Activated CD8-positive, alpha-beta T cell treated with anti-CD3 and anti-CD28 coated beads, Interleukin-2, amount 10 ng/mL, durations not matched to agents 7 days and 5 days (primary cell): ENCODE measurements at regions of chr15 and their contacts with region 1.

Region 1: GRCh38 chr15:70722266-70723121 is 40.9 kb downstream of the UACA start:
- DNase-seq: no peak
- ATAC-seq: no peak
- H3K4me3 Mint-ChIP-seq: no peak overlapping the region
- H3K27ac Mint-ChIP-seq: no peak overlapping the region
- H3K4me1 Mint-ChIP-seq: no peaks in the 10 kb centered on the region
- H3K27me3 Mint-ChIP-seq: peaks cover 10% of the 10 kb centered on the region

Region 2: GRCh38 chr15:70447928-70448698 is 274.4 kb before region 1 on chr15:
- CTCF ChIA-PET with region 1: no interaction called
- POLR2A ChIA-PET with region 1: no interaction called
- DNase-seq: peak; percentile 80
- ATAC-seq: peak; percentile 73
- H3K4me3 Mint-ChIP-seq: peak overlapping the region; percentile 46
- H3K27ac Mint-ChIP-seq: peak overlapping the region; percentile 53
- H3K4me1 Mint-ChIP-seq: peaks cover 64% of the 10 kb centered on the region
- H3K27me3 Mint-ChIP-seq: peaks cover 37% of the 10 kb centered on the region

Region 3: GRCh38 chr15:70535071-70535954 is 187.2 kb before region 1 on chr15:
- CTCF ChIA-PET with region 1: interaction called, 12 read pairs
- POLR2A ChIA-PET with region 1: no interaction called
- DNase-seq: peak; percentile 89
- ATAC-seq: peak; percentile 88
- H3K4me3 Mint-ChIP-seq: peak overlapping the region; percentile 80
- H3K27ac Mint-ChIP-seq: peak overlapping the region; percentile 96
- H3K4me1 Mint-ChIP-seq: peaks cover 47% of the 10 kb centered on the region
- H3K27me3 Mint-ChIP-seq: peaks cover 5% of the 10 kb centered on the region

Region 4: DNA sequence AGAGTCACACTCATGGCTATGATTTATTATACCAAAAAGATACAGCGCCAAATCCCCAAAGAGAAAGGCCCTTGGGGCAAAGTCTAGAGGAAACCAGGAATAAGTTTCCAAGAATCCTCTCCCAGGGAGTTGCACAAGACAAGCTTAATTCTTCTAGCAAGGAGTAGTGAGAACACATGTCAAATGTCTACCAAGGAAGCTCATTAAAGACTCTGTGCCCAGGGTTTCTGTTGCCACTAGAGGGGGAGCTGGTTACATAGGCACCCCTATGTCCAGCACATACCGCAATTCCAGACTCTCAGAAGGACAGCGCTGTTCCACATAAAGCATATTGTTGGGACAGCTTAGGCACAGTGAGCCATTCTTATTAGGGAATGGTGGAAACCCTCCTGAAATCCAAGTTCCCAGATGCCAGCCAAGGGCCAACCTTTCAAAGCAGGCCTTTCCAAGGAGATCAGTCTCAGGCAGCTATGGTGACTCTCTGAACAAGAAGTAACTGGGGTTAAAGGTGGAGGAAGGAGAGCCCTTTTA is 153.3 kb before region 1 on chr15:
- CTCF ChIA-PET with region 1: interaction called, 11 read pairs
- POLR2A ChIA-PET with region 1: no interaction called
- DNase-seq: no peak
- ATAC-seq: no peak
- H3K4me3 Mint-ChIP-seq: no peak overlapping the region
- H3K27ac Mint-ChIP-seq: no peak overlapping the region
- H3K4me1 Mint-ChIP-seq: peaks cover 3% of the 10 kb centered on the region
- H3K27me3 Mint-ChIP-seq: peaks cover 5% of the 10 kb centered on the region

Region 5: GRCh38 chr15:70596354-70597055 is 126.0 kb before region 1 on chr15:
- CTCF ChIA-PET with region 1: no interaction called
- POLR2A ChIA-PET with region 1: no interaction called
- DNase-seq: no peak
- ATAC-seq: no peak
- H3K4me3 Mint-ChIP-seq: no peak overlapping the region
- H3K27ac Mint-ChIP-seq: no peak overlapping the region
- H3K4me1 Mint-ChIP-seq: peaks cover 9% of the 10 kb centered on the region
- H3K27me3 Mint-ChIP-seq: peaks cover 16% of the 10 kb centered on the region

Region 6: DNA sequence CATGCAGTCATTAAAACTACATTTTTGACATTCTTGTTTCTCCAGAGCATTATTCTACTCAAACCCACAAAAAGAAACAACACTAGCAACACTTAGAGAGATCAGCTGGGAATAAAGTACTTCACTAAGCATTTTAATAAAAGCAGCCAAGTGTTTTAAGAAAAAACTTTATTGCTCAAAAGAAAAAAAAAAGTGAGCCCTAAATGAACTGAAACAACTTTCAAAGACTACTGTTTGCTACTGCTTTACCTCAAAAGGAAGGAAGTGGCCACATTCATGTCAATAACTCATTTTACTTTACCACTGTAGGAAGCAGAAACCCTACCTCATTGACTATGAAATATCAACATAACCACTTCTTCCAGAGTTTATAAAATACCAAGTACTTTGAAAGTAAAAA is 50.4 kb before region 1 on chr15:
- CTCF ChIA-PET with region 1: interaction called, 36 read pairs
- POLR2A ChIA-PET with region 1: no interaction called
- DNase-seq: peak; percentile 45
- ATAC-seq: peak; percentile 94
- H3K4me3 Mint-ChIP-seq: peak overlapping the region; percentile 68
- H3K27ac Mint-ChIP-seq: peak overlapping the region; percentile 82
- H3K4me1 Mint-ChIP-seq: peaks cover 29% of the 10 kb centered on the region
- H3K27me3 Mint-ChIP-seq: peaks cover 5% of the 10 kb centered on the region

Region 7: DNA sequence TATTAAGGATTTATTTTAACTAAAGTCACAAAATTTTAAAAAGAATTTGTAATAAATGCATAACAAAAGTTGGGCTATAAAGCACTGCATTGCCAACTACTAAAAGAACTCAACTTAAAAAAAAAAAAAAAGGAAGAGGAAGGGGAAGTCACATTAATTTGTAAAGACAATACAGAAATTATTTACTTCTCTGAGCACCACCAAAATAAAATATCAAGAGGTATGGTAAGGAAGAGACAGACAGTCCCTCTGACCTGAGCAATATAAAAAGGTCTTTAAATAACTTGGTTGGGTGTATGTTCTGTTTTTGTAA is 42.6 kb before region 1 on chr15:
- CTCF ChIA-PET with region 1: interaction called, 42 read pairs
- POLR2A ChIA-PET with region 1: no interaction called
- DNase-seq: no peak
- ATAC-seq: no peak
- H3K4me3 Mint-ChIP-seq: no peak overlapping the region
- H3K27ac Mint-ChIP-seq: no peak overlapping the region
- H3K4me1 Mint-ChIP-seq: peaks cover 8% of the 10 kb centered on the region
- H3K27me3 Mint-ChIP-seq: peaks cover 36% of the 10 kb centered on the region

Region 8: GRCh38 chr15:70690491-70691257 is 31.8 kb before region 1 on chr15:
- CTCF ChIA-PET with region 1: interaction called, 16 read pairs
- POLR2A ChIA-PET with region 1: no interaction called
- DNase-seq: no peak
- ATAC-seq: no peak
- H3K4me3 Mint-ChIP-seq: no peak overlapping the region
- H3K27ac Mint-ChIP-seq: no peak overlapping the region
- H3K4me1 Mint-ChIP-seq: no peaks in the 10 kb centered on the region
- H3K27me3 Mint-ChIP-seq: peaks cover 18% of the 10 kb centered on the region

Region 9: GRCh38 chr15:70703096-70703878 is 19.2 kb before region 1 on chr15:
- CTCF ChIA-PET with region 1: interaction called, 14 read pairs
- POLR2A ChIA-PET with region 1: no interaction called
- DNase-seq: no peak
- ATAC-seq: no peak
- H3K4me3 Mint-ChIP-seq: no peak overlapping the region
- H3K27ac Mint-ChIP-seq: no peak overlapping the region
- H3K4me1 Mint-ChIP-seq: no peaks in the 10 kb centered on the region
- H3K27me3 Mint-ChIP-seq: peaks cover 48% of the 10 kb centered on the region

Region 10: DNA sequence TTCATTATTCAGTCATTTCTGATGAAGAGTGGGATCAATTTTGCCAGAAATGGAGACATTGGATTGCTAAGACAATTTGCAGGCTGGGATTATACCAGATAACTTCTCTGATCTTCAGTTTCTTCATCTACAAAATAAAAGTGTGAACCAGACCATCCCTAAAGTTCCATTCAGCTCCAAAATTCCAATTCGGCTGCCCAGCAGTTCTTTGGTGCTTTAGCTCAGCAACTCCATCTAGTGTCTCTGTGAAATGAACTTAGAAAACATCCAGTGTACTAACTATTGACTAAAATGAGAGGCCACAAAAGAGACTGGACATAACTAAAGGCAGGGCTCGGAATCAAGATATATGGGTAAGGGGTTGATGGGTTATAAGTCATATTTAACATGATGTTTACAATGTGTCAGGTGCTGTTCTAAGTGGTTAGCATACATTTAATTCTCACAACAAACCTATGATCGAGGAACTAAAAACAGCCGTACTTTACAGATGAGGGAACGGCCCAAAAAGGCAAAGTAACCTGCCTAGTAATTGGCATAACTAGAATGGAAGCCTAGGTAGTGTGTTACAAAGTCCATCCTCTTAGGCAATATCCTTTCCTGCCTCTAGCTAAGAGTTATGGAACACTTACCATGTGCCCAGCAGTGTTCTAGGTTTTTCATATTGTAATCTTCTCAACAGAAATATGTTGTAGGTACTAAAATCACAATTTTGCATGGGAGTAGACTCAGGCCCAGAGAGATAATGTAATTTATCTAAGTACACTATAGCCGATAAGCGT is 152.7 kb after region 1 on chr15:
- CTCF ChIA-PET with region 1: no interaction called
- POLR2A ChIA-PET with region 1: no interaction called
- DNase-seq: no peak
- ATAC-seq: no peak
- H3K4me3 Mint-ChIP-seq: no peak overlapping the region
- H3K27ac Mint-ChIP-seq: no peak overlapping the region
- H3K4me1 Mint-ChIP-seq: no peaks in the 10 kb centered on the region
- H3K27me3 Mint-ChIP-seq: peaks cover 37% of the 10 kb centered on the region

Region 11: DNA sequence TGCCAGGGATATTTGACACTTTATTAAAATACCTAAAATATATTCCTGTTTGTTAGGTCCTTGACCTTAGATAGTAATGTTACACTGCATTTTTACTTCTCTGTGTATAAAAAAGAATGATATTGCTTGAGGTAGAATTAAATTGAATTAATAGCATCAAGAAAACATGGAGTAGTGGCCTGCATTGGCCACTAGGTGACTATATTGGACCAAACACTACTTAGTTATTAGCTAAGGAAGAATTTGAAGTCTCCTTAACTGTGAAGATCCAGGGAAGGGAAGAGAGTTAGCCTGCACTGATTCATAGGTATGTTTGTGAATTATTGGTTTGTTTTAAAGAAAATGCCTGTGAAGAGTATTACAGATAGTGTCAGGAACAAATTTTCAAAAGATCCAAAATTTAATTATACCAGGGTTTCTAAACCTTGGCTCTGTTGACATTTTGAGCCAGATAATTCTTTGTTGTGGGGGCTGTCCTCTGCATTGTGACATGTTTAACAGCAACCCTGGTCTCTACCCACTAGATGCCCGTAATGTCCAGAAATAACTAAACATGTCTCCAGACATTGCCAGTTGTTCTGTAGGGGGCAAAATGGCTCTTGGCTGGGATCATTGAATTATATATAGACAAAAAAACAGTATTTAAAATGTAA is 289.1 kb after region 1 on chr15:
- CTCF ChIA-PET with region 1: no interaction called
- POLR2A ChIA-PET with region 1: no interaction called
- DNase-seq: no peak
- ATAC-seq: no peak
- H3K4me3 Mint-ChIP-seq: no peak overlapping the region
- H3K27ac Mint-ChIP-seq: no peak overlapping the region
- H3K4me1 Mint-ChIP-seq: no peaks in the 10 kb centered on the region
- H3K27me3 Mint-ChIP-seq: peaks cover 7% of the 10 kb centered on the region